ENCODE measurements at regions of chr10 and their contacts with region 1.

Region 1: DNA sequence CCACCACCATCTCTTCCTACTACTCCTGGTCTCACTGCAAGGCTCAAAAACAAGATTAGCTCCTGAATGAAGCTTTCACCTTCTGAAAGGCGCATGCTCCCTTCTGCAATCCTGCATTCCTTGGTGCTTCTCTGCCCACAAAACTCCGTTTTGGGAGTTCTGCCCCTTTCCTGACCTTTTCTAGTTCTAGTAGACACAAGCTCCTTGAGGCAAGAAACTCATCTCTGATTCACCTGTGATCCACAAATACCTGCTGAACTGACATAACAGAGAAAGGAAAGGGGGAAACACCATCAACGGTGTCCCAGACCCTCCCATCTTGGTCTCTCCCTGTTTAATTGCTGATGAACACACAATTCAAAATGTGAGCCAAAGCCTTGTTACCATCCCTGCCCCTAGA is 64.0 kb upstream of the EGR2 start:
- DNase-seq: peak; percentile 92
- H3K4me3 ChIP-seq: no peak overlapping the region
- H3K27ac ChIP-seq: no peak overlapping the region
- H3K4me1 ChIP-seq: peaks cover 12% of the 10 kb centered on the region
- H3K27me3 ChIP-seq: no peaks in the 10 kb centered on the region
- CTCF ChIP-seq: no peak

Region 2: DNA sequence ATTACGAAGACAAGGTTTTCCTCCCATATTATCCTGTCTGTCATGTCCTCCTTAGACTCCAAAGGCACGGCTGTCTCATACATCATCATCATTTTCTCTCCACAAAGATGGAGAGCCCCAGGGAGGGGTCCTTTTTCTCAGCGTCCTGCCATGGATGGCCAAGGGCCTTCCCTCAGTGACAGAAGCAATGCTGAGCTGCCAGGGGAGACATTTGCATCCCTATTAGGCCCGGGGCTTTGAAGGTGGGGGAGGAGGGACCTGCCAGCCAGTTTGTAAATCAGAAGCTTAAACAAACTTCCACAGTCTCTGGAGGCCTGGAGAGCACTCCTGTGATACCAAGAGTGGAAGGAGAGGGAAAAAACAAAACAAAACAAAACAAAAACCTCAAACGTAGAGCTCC is 188.1 kb before region 1 on chr10:
- CTCF ChIA-PET with region 1: no interaction called
- dilution Hi-C with region 1: no loop called
- in situ Hi-C with region 1: no loop called
- intact Hi-C with region 1: no loop called
- DNase-seq: no peak
- H3K4me3 ChIP-seq: no peak overlapping the region
- H3K27ac ChIP-seq: no peak overlapping the region
- H3K4me1 ChIP-seq: no peaks in the 10 kb centered on the region
- H3K27me3 ChIP-seq: no peaks in the 10 kb centered on the region
- CTCF ChIP-seq: no peak

Region 3: DNA sequence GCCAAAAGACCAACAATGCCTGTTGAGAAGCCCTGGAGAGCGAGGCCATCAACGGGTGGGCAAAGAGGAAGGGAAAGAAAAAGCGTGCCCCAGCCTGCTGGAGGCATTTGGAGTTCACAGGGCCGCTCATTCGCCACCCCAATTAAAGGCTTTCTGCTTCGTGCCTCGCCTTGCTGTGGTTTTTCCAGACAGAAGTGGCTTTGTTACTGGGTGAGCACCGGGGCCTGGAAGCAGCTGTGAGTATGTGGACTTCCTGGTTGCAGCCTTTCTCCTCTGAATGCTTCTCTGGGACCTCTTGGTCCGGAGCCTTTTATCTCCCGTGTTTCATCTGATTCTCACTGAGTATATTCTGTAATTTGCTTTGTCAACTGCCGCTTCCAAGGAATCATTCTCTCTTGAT is 54.1 kb after region 1 on chr10:
- CTCF ChIA-PET with region 1: no interaction called
- dilution Hi-C with region 1: loop called (anchors 5 kb)
- in situ Hi-C with region 1: no loop called
- intact Hi-C with region 1: no loop called
- DNase-seq: peak; percentile 91
- H3K4me3 ChIP-seq: no peak overlapping the region
- H3K27ac ChIP-seq: peak overlapping the region; percentile 50
- H3K4me1 ChIP-seq: peaks cover 17% of the 10 kb centered on the region
- H3K27me3 ChIP-seq: no peaks in the 10 kb centered on the region
- CTCF ChIP-seq: no peak

Region 4: GRCh38 chr10:63003816-63004453 is 123.8 kb after region 1 on chr10:
- CTCF ChIA-PET with region 1: no interaction called
- dilution Hi-C with region 1: no loop called
- in situ Hi-C with region 1: no loop called
- intact Hi-C with region 1: no loop called
- DNase-seq: no peak
- H3K4me3 ChIP-seq: no peak overlapping the region
- H3K27ac ChIP-seq: no peak overlapping the region
- H3K4me1 ChIP-seq: peaks cover 14% of the 10 kb centered on the region
- H3K27me3 ChIP-seq: no peaks in the 10 kb centered on the region
- CTCF ChIP-seq: peak; percentile 30 to 40

Region 5: GRCh38 chr10:63071140-63071539 is 191.0 kb after region 1 on chr10:
- CTCF ChIA-PET with region 1: no interaction called
- dilution Hi-C with region 1: no loop called
- in situ Hi-C with region 1: no loop called
- intact Hi-C with region 1: no loop called
- DNase-seq: no peak
- H3K4me3 ChIP-seq: no peak overlapping the region
- H3K27ac ChIP-seq: no peak overlapping the region
- H3K4me1 ChIP-seq: peaks cover 13% of the 10 kb centered on the region
- H3K27me3 ChIP-seq: no peaks in the 10 kb centered on the region
- CTCF ChIP-seq: no peak

Measured in mammary epithelial cell (primary cell).